ENCODE measurements at regions of chr1 and their contacts with region 1.

Region 1: GRCh38 chr1:211675230-211676105 is at the start of gene NEK2:
- DNase-seq: peak; percentile 95 to 99 (median 95)
- ATAC-seq: peak; percentile 97
- H3K4me3 ChIP-seq: peak within 1 kb of the TSS; percentile 75
- H3K27ac ChIP-seq: peak within 1 kb of the TSS; percentile 88
- H3K4me1 ChIP-seq: peaks cover 10 to 16% of the 10 kb centered on the region in 2 experiments; a peak in 4 of 5 replicates
- H3K27me3 ChIP-seq: no peaks in the 10 kb centered on the region
- CTCF ChIP-seq: no peak
- EP300 ChIP-seq: peak; percentile 19; the same call in 1 of the 2 replicates
- POLR2A ChIP-seq: peak; percentile 90
- RAD21 ChIP-seq: 0 out of 4 replicates have a peak, but pooled peaks have one; percentile 9 to 17
- polyA plus RNA-seq, gene NEK2: 30.0 to 38.6 TPM

Region 2: GRCh38 chr1:211660718-211661222 is 14.7 kb before region 1 on chr1:
- CTCF ChIA-PET with region 1: no interaction called
- POLR2A ChIA-PET with region 1: interaction called, 25 read pairs
- in situ Hi-C with region 1: no loop called
- intact Hi-C with region 1: no loop called
- DNase-seq: no peak
- ATAC-seq: no peak
- H3K4me3 ChIP-seq: no peak overlapping the region
- H3K27ac ChIP-seq: no peak overlapping the region
- H3K4me1 ChIP-seq: no peaks in the 10 kb centered on the region
- H3K27me3 ChIP-seq: no peaks in the 10 kb centered on the region
- CTCF ChIP-seq: no peak
- EP300 ChIP-seq: no peak
- POLR2A ChIP-seq: no peak
- RAD21 ChIP-seq: no peak

Measured in K562 (cell line).